Psoas muscle (tissue), 8 donors: ENCODE measurements at regions of chr2 and their contacts with region 1.

Region 1: DNA sequence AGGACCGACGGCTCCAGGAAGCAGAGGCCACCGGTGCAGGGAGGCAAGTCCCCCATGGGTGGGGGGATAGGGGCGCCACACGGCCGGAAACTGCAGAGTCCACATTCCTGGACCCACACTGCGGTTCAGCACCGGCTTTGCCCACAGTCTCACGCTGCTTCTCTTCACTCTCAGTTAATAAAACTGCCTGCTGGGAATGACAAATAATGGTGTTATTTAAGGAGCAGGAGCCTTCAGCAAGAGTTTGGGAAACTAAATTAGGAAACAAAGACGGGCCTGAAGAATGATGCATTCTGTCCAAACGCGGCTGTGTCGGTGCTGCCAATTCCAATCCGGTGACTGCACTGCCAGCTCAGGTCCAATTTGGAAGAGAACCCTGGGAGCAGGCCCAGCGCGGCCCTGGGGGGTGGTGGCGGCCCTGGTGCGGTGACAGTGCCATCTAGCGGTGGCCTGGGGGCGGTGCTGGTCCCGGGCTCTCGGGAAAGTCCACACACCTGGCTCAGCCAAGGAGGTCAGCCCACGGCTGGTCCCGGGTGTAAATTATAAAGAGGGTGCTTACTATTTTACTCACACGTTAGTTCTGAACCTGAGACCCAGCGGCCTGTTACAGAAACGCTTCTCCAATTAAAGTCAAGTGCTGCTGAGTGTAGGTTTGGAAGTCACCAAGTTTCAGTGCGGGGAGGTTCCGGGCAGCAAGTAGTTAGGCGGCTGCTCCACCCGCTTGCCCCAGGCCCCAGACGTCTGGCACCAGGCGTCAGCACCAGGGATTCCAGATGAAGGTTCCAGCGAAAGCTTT is 73.1 kb upstream of the PXDN start:
- DNase-seq: peak; percentile 90 to 95
- ATAC-seq: peak; percentile 94 to 98 (median 96)
- H3K4me3 ChIP-seq: no peak overlapping the region
- H3K27ac ChIP-seq: peak overlapping the region; percentile 84
- H3K4me1 ChIP-seq: peaks cover 9% of the 10 kb centered on the region
- H3K27me3 ChIP-seq: no peaks in the 10 kb centered on the region
- CTCF ChIP-seq: peak; percentile 97

Region 2: GRCh38 chr2:677056-677965 is 1140.1 kb before region 1 on chr2 and contains the start of gene TMEM18:
- intact Hi-C with region 1: loop called in 1 of 2 experiments (anchors 10 kb)
- DNase-seq: peak in 1 of 2 donors; percentile 90
- ATAC-seq: peak; percentile 89 to 93 (median 92)
- H3K4me3 ChIP-seq: peak within 1 kb of the TSS; percentile 95
- H3K27ac ChIP-seq: peak within 1 kb of the TSS; percentile 97
- H3K4me1 ChIP-seq: peaks cover 15% of the 10 kb centered on the region
- H3K27me3 ChIP-seq: no peaks in the 10 kb centered on the region
- CTCF ChIP-seq: no peak
- total RNA-seq, gene TMEM18: 13.3 to 22.6 (median 16.0) TPM

Region 3: GRCh38 chr2:854460-854859 is 963.0 kb before region 1 on chr2:
- intact Hi-C with region 1: loop called in 1 of 2 experiments (anchors 10 kb)
- DNase-seq: no peak
- ATAC-seq: no peak
- H3K4me3 ChIP-seq: no peak overlapping the region
- H3K27ac ChIP-seq: no peak overlapping the region
- H3K4me1 ChIP-seq: no peaks in the 10 kb centered on the region
- H3K27me3 ChIP-seq: no peaks in the 10 kb centered on the region
- CTCF ChIP-seq: peak; percentile 43

Region 4: DNA sequence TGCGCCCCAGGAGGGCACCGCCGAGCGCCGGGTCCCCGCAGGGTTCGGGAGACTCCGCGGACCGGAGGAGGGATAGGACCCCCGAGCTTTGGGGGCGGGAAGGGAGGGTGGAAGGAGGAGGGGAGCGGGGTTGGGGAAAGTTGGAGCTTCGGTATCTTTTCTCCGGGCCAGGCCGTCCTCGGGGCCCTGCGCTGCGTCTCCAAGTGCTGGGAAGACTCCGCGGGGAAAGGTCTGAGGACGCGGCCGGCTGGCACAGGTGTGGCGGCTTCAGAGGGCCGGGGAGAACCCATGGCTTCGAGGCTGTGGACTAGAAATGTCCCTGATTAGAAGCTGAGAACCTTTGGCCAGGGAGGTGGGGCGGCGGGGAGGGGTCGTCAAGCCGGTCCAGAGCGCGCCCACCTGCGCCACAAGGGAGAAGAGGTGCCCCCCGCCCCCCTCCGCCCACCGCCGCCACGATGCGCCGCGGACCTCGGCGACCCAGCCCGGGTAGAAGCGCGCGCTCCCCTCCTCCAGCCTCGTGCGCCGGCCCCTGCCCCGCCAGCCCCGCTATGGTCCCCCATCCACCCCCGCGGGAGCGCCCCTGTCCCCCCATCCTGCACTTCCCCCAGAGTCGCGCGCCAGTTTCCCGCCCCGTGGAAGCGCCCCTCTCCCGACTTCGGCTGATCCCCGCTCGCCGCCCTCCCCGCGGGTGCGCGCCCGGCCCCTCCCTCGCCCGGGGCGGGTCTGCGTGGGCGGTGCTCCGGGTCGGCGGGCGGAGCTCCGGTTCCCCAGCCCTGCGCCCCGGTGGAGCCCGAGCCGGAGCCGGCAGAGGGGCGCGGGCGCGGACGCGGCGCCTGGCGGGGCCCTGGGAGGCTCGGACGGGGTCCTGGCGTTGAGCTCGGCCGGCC is 867.1 kb before region 1 on chr2 and contains the start of gene SNTG2:
- intact Hi-C with region 1: loop called in 1 of 2 experiments (anchors 10 kb)
- DNase-seq: peak in 1 of 2 donors; percentile 56
- ATAC-seq: peak in 3 of 4 donors; percentile 44 to 53 (median 44)
- H3K4me3 ChIP-seq: peak within 1 kb of the TSS; percentile 63
- H3K27ac ChIP-seq: no peak within 1 kb of the TSS
- H3K4me1 ChIP-seq: no peaks in the 10 kb centered on the region
- H3K27me3 ChIP-seq: peaks cover 6 to 72% (median 13%) of the 10 kb centered on the region in 3 donors
- CTCF ChIP-seq: no peak
- total RNA-seq, gene SNTG2: 0.73 to 1.7 (median 1.2) TPM in 3 of 4 donors, not detected in the other

Region 5: DNA sequence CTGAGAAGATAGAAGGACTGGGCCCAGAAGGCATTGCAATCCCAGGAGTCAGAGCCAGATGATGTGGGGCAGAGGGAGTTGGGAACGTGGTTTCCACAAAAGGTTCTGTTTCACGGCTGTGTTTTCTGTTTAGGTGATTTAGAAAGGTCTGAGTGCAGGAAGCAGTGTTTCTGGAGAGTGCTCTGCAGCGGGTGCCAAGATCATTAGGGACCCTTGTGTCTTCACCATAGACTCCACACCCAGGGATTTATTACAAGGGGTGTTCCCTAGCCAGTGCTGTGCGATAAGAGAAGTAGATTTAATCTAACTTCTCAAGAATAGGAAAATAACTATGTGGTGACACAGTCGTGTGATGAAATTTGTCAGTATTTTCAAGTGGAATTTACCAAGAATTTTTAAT is 625.3 kb before region 1 on chr2:
- intact Hi-C with region 1: no loop called
- DNase-seq: no peak
- ATAC-seq: no peak
- H3K4me3 ChIP-seq: no peak overlapping the region
- H3K27ac ChIP-seq: no peak overlapping the region
- H3K4me1 ChIP-seq: no peaks in the 10 kb centered on the region
- H3K27me3 ChIP-seq: no peaks in the 10 kb centered on the region
- CTCF ChIP-seq: no peak

Region 6: GRCh38 chr2:1605102-1606045 is 212.1 kb before region 1 on chr2:
- intact Hi-C with region 1: loop called in 1 of 2 experiments (anchors 5 kb)
- DNase-seq: peak; percentile 67 to 79
- ATAC-seq: peak; percentile 42 to 67 (median 63)
- H3K4me3 ChIP-seq: no peak overlapping the region
- H3K27ac ChIP-seq: peak overlapping the region; percentile 36
- H3K4me1 ChIP-seq: peaks cover 5% of the 10 kb centered on the region
- H3K27me3 ChIP-seq: peaks cover 0 to 49% (median 7%) of the 10 kb centered on the region in 3 donors
- CTCF ChIP-seq: no peak

Region 7: DNA sequence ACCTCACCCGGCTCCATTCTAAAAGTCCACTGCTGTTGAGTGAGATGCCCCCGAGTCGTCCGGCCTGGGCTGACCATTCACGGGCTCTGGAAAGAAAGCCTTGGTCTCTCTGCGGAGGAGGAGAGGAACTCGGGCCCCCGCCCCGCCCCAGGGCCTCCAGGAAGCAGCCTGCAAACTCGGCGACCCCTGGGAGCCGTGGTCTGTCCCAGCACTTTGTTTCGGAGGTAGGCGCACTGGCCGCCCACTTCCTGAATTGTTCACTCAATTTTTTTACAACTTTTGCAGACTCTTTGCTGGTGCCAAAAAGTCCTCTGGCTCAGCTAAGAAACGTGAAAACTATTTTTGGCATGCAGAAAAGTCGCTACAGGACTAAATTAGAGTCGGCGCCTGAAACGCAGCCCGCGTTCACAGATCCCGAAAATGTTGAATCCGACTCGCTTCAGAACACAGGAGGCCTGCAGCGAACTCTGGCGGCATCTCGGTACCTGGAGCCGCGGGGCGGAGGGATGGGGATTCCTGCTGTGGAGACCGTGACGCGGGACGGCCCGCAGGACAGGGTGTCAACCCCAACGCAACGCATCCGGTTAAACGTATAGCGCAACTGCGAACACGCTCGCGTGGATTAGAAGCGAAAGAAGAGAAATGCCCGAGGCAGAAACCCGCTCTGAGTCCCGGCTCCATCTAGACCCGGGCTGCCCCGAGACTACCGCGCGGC is 74.6 kb before region 1 on chr2:
- intact Hi-C with region 1: loop called in 1 of 2 experiments (anchors 5 kb)
- DNase-seq: peak; percentile 77 to 86
- ATAC-seq: peak; percentile 30 to 65 (median 41)
- H3K4me3 ChIP-seq: peak overlapping the region; percentile 69
- H3K27ac ChIP-seq: peak overlapping the region; percentile 71
- H3K4me1 ChIP-seq: peaks cover 12% of the 10 kb centered on the region
- H3K27me3 ChIP-seq: peaks cover 0 to 61% (median 6%) of the 10 kb centered on the region in 3 donors
- CTCF ChIP-seq: peak; percentile 32

Region 8: DNA sequence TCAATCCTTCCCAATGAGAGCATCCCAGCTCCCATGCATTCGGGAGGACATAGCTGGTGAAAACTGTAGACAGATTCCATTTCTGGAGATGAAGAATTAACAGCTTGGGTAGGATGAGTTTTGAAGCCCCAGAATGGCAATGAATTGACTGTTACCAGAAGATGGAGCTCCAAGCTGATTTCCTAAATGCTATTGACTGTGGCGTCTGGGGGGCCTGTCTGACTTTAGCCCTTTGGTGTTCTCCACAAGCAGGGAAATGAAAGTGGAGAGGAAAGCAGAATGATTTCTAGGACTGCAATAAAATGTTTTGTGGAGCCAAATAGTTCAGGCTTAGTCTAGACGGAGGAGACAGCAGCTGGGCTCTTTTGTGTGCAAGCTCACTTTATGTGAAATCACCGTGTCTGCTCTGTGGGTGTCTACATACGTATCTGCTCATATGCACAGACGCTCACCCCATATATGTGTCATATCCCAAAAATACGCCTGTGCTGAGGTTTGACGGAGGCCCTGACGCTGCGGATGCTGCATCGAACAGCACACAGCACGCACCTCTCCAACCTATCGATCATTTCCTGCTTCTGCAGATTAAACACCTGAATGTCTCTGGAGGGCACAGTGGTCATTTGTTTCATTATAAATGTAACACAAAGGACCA is 93.3 kb after region 1 on chr2:
- intact Hi-C with region 1: no loop called
- DNase-seq: no peak
- ATAC-seq: no peak
- H3K4me3 ChIP-seq: no peak overlapping the region
- H3K27ac ChIP-seq: no peak overlapping the region
- H3K4me1 ChIP-seq: no peaks in the 10 kb centered on the region
- H3K27me3 ChIP-seq: peaks cover 0 to 13% (median 2%) of the 10 kb centered on the region in 3 donors
- CTCF ChIP-seq: no peak